ENCODE measurements at regions of chr19 and their contacts with region 1.

Region 1: GRCh38 chr19:3054972-3055740 is 7.1 kb downstream of the TLE5 start:
- DNase-seq: no peak
- H3K4me3 Mint-ChIP-seq: no peak overlapping the region
- H3K27ac Mint-ChIP-seq: no peak overlapping the region
- H3K4me1 Mint-ChIP-seq: peaks cover 30% of the 10 kb centered on the region
- H3K27me3 Mint-ChIP-seq: no peaks in the 10 kb centered on the region

Region 2: DNA sequence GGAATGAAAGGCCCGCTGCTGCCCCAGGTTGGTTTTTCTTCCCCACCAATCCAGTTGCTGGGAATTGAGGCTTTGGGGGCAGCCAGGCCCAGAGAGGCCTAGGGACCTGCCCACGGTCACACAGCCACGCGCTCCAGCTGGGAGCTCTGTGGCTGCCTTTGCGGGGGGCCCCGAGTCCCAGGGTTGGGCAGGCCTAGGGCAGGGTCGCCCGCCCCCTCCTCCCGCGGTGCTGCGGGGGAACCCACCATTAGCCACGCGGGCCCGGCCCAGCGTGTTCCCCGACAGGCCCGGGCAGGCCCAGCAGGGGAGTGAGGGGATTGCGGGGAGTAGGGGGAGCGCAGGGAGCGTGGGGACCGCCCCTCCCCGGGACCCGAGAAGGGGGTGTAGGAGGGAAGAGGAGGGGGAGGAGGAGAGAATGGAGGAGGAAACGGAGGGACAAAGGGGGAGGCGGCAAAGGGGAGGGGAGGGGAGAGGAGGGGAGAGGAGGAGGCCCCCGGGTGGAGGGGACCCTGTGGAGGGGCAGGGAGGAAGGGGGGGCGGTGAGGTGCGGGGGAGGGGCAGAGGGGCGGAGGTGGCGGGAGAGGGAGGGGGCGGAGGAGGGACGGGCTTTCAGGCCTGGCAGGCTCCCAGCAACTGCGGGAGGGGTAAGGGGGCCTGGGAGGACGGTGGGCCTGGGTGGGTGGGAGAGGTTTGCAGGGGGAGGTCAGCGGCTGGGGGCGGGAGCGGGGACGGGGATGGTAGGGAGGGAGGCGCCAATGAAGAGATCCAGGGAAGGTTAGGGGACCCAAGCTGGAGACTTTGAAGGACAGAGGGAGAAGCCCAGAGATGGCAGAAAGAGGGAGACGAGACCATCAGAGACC is 13.2 kb before region 1 on chr19:
- CTCF ChIA-PET with region 1: interaction called, 23 read pairs
- POLR2A ChIA-PET with region 1: interaction called, 81 read pairs
- DNase-seq: no peak
- H3K4me3 Mint-ChIP-seq: no peak overlapping the region
- H3K27ac Mint-ChIP-seq: no peak overlapping the region
- H3K4me1 Mint-ChIP-seq: peaks cover 2% of the 10 kb centered on the region
- H3K27me3 Mint-ChIP-seq: no peaks in the 10 kb centered on the region